Sciatic nerve (tissue), 2 donors: ENCODE measurements at regions of chrX and their contacts with region 1.

Region 1: GRCh38 chrX:142296421-142296820 is 91.3 kb upstream of the MAGEC2 start:
- DNase-seq: no peak
- ATAC-seq: no peak

Region 2: DNA sequence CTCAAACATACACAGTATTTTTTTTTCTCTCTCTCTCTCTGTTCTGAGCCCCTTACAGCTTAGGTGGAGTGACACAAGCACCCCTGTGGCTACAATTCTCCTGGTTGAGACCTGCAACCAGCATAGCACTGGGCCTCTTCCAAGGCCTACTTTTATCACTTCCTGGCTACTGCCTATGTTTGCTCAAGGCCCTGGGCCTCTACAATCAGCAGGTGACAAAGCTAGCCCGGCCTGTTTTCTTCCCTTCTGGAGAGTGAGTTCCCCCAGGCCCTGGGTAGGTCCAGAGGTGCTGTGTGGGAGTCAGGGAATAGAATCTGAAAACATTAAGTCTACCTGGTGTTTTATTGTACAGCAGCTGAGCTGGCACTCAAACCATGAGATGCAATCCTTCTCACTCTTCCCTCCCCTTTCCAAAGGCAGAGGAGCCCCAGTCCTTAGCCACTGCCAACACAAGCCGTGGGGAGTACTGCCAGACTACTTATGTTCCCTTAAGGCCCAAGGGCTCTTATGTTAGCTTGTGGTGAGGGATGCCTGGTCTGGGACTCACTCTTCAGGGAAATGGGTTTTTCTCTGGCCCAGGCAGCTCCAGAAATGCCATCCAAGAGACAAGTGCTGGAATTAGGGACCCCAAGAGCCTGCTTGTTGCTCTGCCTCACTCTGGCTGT is 482.1 kb before region 1 on chrX:
- intact Hi-C with region 1: loop called (anchors 5 kb)
- DNase-seq: no peak
- ATAC-seq: no peak